A549 (cell line): ENCODE measurements at regions of chr14 and their contacts with region 1.

Region 1: GRCh38 chr14:54509546-54510501 is at the start of gene CGRRF1:
- DNase-seq: peak; percentile 94 to 98
- ATAC-seq: peak; percentile 95 to 99
- H3K4me3 ChIP-seq: peak within 1 kb of the TSS; percentile 81
- H3K27ac ChIP-seq: peak within 1 kb of the TSS; percentile 81 to 93
- H3K4me1 ChIP-seq: peaks cover 8% of the 10 kb centered on the region; the same call in 2 of the 3 replicates
- CTCF ChIP-seq: peak; percentile 33; the same call in 2 of the 3 replicates
- EP300 ChIP-seq: no peak
- POLR2A ChIP-seq: peak; percentile 87
- RAD21 ChIP-seq: peak in 1 of 2 experiments; percentile 40; a peak in 3 of 5 replicates
- polyA plus RNA-seq, gene CGRRF1: 35.4 and 35.9 TPM in 2 replicates

Region 2: DNA sequence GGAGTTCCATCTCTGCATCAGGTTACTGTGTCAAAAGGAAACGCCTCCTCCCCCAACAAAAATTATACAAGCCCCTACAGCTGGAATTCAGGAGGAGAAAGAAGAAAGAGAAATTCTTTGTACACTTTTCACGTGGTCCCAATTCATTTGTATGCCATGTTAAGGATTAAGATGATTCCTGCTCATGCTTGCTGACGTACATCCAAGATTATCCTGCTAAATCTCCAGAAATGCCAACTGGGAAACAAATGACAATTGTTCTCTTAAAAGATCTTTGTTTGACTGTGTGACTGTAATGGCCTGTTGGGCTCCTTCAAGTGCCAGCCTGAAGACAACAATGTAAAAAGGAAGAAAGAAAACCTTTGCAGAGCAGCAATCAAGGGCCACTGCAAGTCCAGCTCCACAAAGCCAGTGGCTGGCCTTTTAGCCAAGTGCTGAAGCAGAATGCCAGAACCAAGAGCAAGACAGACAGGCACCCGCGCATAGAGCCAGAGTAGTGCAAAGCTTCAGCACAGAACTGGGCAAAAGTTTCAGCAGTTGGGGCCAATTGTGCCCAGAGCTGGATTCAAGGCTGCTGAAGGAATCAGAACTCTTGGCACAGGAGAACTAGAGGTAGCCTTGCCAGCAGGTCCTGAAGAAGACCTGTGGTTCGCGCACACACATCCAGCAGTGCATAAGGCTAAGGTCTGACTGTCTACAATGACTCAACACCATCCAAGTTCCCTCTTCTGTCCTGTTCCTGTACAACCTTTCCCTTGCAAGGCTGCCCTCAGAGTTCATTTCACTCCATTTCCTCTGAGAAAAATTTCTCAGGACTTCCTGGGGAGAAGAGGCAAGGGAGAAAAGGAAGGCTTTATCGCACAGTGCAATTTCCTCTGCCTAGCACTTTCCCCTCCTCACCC is 343.5 kb before region 1 on chr14:
- CTCF ChIA-PET with region 1: no interaction called
- POLR2A ChIA-PET with region 1: no interaction called
- DNase-seq: no peak
- ATAC-seq: no peak
- H3K4me3 ChIP-seq: no peak overlapping the region
- H3K27ac ChIP-seq: no peak overlapping the region
- H3K4me1 ChIP-seq: no peaks in the 10 kb centered on the region
- CTCF ChIP-seq: no peak
- EP300 ChIP-seq: no peak
- POLR2A ChIP-seq: no peak
- RAD21 ChIP-seq: no peak

Region 3: DNA sequence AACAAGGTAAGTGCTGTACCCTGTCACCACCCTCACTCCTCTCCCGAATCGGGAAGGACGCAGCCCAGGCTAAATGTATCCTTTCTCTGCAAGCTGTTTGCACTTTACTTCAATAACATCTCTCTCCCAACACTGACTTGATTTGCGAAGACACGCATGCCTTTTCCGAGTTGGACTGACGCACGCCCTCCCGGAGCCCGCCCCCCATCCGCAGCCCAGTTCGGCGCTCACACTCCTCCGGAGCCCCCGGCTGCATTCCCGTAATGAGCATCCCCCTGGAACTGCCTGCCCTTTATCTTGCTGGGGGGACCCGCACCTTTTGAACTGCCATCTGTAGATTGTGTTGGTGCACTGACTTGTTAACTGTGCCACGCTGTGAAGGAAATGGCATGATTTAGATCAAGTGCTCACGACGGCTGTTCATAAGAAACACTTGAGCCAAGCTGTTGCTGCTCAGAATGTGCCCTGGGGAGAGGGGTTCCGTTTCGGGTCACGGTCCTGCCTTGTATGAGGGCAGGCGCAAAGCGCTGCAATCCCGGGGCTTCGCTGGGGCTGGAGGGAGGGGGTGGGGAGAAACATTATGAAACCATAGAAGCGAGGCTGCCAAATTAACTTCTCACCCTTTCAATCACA is 289.6 kb before region 1 on chr14:
- CTCF ChIA-PET with region 1: no interaction called
- POLR2A ChIA-PET with region 1: no interaction called
- DNase-seq: no peak
- ATAC-seq: no peak
- H3K4me3 ChIP-seq: no peak overlapping the region
- H3K27ac ChIP-seq: no peak overlapping the region
- H3K4me1 ChIP-seq: no peaks in the 10 kb centered on the region
- CTCF ChIP-seq: no peak
- EP300 ChIP-seq: no peak
- POLR2A ChIP-seq: no peak
- RAD21 ChIP-seq: no peak

Region 4: DNA sequence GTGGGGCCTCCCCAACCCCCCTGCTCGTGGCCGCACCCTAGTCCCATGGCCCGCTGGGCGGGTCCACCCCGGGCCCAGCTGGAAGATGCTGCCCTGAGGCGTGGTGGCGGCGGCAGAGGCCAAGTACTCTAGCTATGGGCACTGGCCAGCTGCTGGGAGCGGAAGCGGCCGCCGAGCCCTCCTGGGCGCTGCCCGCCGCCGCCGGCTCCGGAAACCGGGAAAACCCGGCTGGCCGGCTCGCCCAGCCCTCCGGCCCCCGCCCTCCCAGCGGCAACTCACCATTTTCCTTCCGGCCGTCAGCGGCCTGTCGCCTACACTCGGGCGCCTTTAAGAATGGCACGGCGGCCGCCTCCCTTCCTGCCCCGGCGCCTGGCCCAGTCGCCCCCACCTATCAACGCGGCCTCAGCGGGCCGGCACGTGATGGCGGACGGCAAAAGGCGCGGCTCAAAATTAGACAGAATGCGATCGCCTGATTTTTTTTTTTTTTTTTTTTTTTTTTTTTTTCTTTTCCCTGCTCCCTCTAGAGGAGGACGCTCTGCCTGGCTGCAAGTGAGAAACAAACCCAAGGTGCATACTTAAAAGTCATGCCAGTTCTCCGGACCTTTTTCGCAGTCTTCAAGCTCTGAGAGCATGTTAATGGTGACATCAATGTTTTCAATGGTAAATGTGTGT is 21.0 kb before region 1 on chr14 and contains the start of gene GMFB:
- CTCF ChIA-PET with region 1: interaction called, 66 read pairs
- POLR2A ChIA-PET with region 1: interaction called, 13 read pairs
- DNase-seq: peak; percentile 79 to 94
- ATAC-seq: peak; percentile 95 to 97
- H3K4me3 ChIP-seq: peak within 1 kb of the TSS; percentile 84
- H3K27ac ChIP-seq: peak within 1 kb of the TSS; percentile 95 to 98
- H3K4me1 ChIP-seq: peaks cover 26% of the 10 kb centered on the region
- CTCF ChIP-seq: peak; percentile 37
- EP300 ChIP-seq: no peak
- POLR2A ChIP-seq: peak; percentile 69
- RAD21 ChIP-seq: 0 out of 5 replicates have a peak, but pooled peaks of 1 of the 2 experiments have one; percentile 8
- polyA plus RNA-seq, gene GMFB: 35.3 and 45.5 TPM in 2 replicates

Region 5: DNA sequence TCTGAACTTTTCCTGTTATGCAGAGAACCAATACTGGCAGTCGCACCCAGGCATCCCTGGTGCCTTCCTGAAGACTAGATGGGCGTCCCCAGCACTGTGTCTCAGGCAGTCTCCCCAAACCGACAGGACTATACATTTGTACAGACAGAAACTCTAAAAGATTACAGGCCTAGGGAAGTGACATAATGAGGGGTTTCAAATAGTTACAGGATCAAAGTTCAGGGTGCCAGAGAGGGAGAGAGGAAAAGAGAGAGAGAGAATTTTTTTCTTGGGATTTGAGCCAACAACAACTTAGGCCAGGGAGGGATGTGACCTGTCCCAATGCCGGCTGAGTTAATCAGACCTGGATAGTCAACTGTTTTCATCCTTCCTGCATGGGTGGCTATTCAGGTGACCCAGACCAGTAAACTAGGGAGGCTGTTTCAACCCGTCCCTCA is 11.7 kb before region 1 on chr14:
- CTCF ChIA-PET with region 1: interaction called, 66 read pairs
- POLR2A ChIA-PET with region 1: interaction called, 13 read pairs
- DNase-seq: no peak
- ATAC-seq: no peak
- H3K4me3 ChIP-seq: no peak overlapping the region
- H3K27ac ChIP-seq: no peak overlapping the region
- H3K4me1 ChIP-seq: peaks cover 4% of the 10 kb centered on the region; the same call in 1 of the 3 replicates
- CTCF ChIP-seq: no peak
- EP300 ChIP-seq: 0 out of 5 replicates have a peak, but pooled peaks of 1 of the 2 experiments have one; percentile 8
- POLR2A ChIP-seq: no peak
- RAD21 ChIP-seq: no peak